GM10248 (cell line): ENCODE measurements at regions of chr10 and their contacts with region 1.

Region 1: GRCh38 chr10:23047201-23048050 is 48.0 kb upstream of the MSRB2 start:
- DNase-seq: no peak
- CTCF ChIP-seq: no peak

Region 2: GRCh38 chr10:23034790-23035189 is 12.6 kb before region 1 on chr10:
- CTCF ChIA-PET with region 1: interaction called, 11 read pairs
- POLR2A ChIA-PET with region 1: no interaction called
- DNase-seq: no peak
- CTCF ChIP-seq: no peak

Region 3: DNA sequence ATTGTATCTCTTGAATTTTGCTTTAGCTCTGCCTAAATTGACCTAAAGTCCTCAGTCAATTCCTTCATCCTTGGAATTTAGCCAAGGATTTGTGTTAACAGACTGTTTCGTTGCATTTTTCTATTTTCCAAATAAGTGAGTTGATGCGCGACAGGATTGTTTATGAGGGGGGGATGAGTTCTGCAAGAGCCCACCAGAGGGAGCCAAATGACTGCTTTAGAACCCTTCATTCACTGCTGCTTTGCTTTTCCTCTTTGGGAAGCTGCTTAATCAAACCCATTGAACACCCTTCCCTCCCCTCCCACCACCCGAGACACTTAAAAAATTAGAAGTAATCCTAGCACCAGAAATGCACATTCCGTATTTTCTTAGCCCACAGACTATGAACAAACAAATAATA is 110.9 kb after region 1 on chr10:
- CTCF ChIA-PET with region 1: no interaction called
- POLR2A ChIA-PET with region 1: no interaction called
- DNase-seq: peak; percentile 79
- CTCF ChIP-seq: peak; percentile 79